ENCODE measurements at regions of chr6 and their contacts with region 1.

Region 1: DNA sequence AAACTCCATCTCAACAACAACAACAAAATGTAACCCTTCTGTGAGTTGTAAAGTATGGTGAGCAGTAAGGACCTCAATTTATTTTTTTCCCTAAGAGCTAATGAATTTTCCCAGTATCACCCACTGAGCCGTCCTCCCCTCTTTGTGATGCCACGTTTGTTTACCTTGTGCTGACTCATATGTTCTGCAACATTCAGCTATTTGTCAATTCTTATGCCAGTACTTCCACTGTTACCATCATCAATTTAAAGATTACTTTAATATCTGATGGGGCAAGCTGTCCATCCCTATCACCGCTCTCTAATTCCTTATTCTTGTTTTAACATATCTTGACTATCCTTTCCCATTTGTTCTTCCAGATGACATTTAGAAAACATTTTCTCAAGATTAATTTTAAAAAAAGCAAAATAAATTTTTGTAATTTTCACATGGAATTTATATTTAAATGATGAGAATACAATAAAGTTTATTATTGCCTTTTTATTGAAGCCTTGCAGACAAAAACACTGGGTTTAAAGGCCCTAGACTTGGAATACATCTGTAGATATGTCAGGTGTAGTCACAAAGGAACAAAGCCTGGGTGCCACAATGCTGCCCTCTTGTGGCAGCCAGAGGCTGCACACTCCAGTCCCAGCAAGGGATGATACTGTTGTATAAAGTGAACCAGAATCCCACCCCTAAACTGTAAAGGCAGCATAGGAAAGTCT is 37.4 kb downstream of the MAK start:
- H3K4me3 Mint-ChIP-seq: no peak overlapping the region
- H3K27ac Mint-ChIP-seq: no peak overlapping the region
- H3K4me1 Mint-ChIP-seq: peaks cover 4% of the 10 kb centered on the region
- H3K27me3 Mint-ChIP-seq: no peaks in the 10 kb centered on the region

Region 2: GRCh38 chr6:10478187-10479040 is 322.6 kb before region 1 on chr6:
- intact Hi-C with region 1: loop called (anchors 1 kb)
- H3K4me3 Mint-ChIP-seq: no peak overlapping the region
- H3K27ac Mint-ChIP-seq: no peak overlapping the region
- H3K4me1 Mint-ChIP-seq: no peaks in the 10 kb centered on the region
- H3K27me3 Mint-ChIP-seq: peaks cover 7% of the 10 kb centered on the region

Region 3: GRCh38 chr6:10510592-10511367 is 290.2 kb before region 1 on chr6:
- intact Hi-C with region 1: loop called (anchors 2 kb)
- H3K4me3 Mint-ChIP-seq: peak overlapping the region; percentile 44
- H3K27ac Mint-ChIP-seq: no peak overlapping the region
- H3K4me1 Mint-ChIP-seq: no peaks in the 10 kb centered on the region
- H3K27me3 Mint-ChIP-seq: no peaks in the 10 kb centered on the region